ENCODE measurements at regions of chr9 and their contacts with region 1.

Region 1: GRCh38 chr9:34500623-34501267 is 22.0 kb downstream of the ENHO start:
- DNase-seq: peak; percentile 70
- CTCF ChIP-seq: peak; percentile 93

Region 2: GRCh38 chr9:34384368-34385165 is 116.2 kb before region 1 on chr9:
- CTCF ChIA-PET with region 1: no interaction called
- POLR2A ChIA-PET with region 1: no interaction called
- DNase-seq: no peak
- CTCF ChIP-seq: no peak

Region 3: GRCh38 chr9:34430843-34431437 is 69.8 kb before region 1 on chr9:
- CTCF ChIA-PET with region 1: interaction called, 77 read pairs
- POLR2A ChIA-PET with region 1: no interaction called
- DNase-seq: peak; percentile 35
- CTCF ChIP-seq: no peak

Region 4: GRCh38 chr9:34437006-34437925 is 63.5 kb before region 1 on chr9:
- CTCF ChIA-PET with region 1: interaction called, 77 read pairs
- POLR2A ChIA-PET with region 1: no interaction called
- DNase-seq: peak; percentile 70
- CTCF ChIP-seq: peak; percentile 83

Region 5: GRCh38 chr9:34443533-34443932 is 57.2 kb before region 1 on chr9:
- CTCF ChIA-PET with region 1: interaction called, 77 read pairs
- POLR2A ChIA-PET with region 1: no interaction called
- DNase-seq: no peak
- CTCF ChIP-seq: no peak

Region 6: GRCh38 chr9:34513567-34514214 is 12.9 kb after region 1 on chr9:
- CTCF ChIA-PET with region 1: interaction called, 30 read pairs
- POLR2A ChIA-PET with region 1: no interaction called
- DNase-seq: no peak
- CTCF ChIP-seq: no peak

Region 7: GRCh38 chr9:34519321-34520020 is 18.7 kb after region 1 on chr9:
- CTCF ChIA-PET with region 1: interaction called, 30 read pairs
- POLR2A ChIA-PET with region 1: no interaction called
- DNase-seq: no peak
- CTCF ChIP-seq: no peak